CD4-positive, alpha-beta T cell (primary cell): ENCODE measurements at regions of chr21 and their contacts with region 1.

Region 1: GRCh38 chr21:41328660-41329607 is 12.3 kb downstream of the FAM3B start:
- DNase-seq: no peak
- ATAC-seq: no peak
- H3K4me3 ChIP-seq: no peak overlapping the region
- H3K4me3 Mint-ChIP-seq: no peak overlapping the region
- H3K27ac ChIP-seq: no peak overlapping the region
- H3K27ac Mint-ChIP-seq: no peak overlapping the region
- H3K4me1 ChIP-seq: no peaks in the 10 kb centered on the region
- H3K4me1 Mint-ChIP-seq: no peaks in the 10 kb centered on the region
- H3K27me3 ChIP-seq: no peaks in the 10 kb centered on the region
- H3K27me3 Mint-ChIP-seq: no peaks in the 10 kb centered on the region
- CTCF ChIP-seq: no peak

Region 2: DNA sequence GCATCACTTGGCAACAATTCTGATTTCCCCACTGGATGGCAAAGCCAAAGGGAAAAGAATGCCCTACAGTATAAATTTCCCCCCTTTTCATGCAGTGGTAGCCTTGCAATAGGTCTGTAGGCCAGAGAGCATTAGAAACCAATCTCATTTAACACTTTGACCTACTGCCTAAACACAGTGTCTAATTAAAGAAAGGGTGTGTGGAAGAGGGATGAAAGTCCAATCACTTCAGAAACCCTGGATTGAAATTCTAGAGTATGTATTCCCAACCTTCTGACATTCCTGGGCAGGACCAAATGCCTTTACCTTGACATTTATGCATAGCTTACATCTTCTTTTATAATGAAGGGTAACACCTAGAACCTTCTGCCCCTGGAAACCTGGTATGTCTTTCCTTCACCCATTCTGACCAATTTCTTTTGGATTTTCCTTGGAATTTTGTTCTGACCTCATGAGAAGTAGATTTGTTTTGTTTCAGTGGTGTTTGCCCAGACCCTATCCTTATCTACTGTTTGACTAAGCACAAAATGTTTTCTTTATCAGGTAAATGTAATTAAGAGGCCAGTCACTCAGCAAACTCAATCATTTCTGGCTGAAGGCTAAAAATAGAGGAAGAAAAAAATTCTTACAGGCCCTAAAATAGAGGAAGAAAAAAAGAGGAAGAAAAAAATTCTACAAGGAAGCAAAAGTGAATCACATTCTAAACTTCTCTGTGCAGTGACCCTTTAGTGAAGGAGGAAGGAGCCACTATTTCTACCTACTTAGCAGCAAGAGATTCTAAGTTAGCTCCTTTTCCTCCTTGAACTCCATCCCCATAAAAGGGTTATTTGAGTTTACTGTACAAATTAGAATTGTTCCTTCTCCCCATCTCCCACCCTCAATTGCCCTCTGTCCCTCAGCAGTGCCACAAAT is 352.5 kb before region 1 on chr21:
- CTCF ChIA-PET with region 1: no interaction called
- POLR2A ChIA-PET with region 1: no interaction called
- intact Hi-C with region 1: no loop called
- DNase-seq: peak in 3 of 14 experiments; percentile 1 to 9 (median 7)
- ATAC-seq: no peak
- H3K4me3 ChIP-seq: no peak overlapping the region
- H3K4me3 Mint-ChIP-seq: no peak overlapping the region
- H3K27ac ChIP-seq: no peak overlapping the region
- H3K27ac Mint-ChIP-seq: no peak overlapping the region
- H3K4me1 ChIP-seq: no peaks in the 10 kb centered on the region
- H3K4me1 Mint-ChIP-seq: no peaks in the 10 kb centered on the region
- H3K27me3 ChIP-seq: no peaks in the 10 kb centered on the region
- H3K27me3 Mint-ChIP-seq: peaks cover 8% of the 10 kb centered on the region
- CTCF ChIP-seq: no peak

Region 3: DNA sequence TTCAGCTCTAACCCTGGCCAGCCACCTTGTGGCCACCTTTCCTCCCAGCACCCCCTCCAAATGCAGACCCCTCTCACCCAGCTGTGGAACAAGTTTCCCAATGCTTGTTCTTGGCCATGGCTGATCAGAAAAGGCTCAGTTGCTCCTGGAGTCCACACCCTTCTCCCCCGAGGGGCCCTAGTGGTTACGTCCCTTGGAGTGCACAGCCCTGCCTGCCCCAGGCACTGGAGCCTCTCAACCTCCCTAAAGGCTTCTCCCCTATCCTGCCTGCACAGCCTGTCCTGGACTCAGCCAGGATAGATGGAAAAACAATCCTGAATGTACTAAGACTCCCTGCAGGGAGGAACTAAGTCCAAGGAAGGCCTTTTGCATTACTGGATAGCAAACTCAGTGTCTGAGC is 51.7 kb after region 1 on chr21:
- CTCF ChIA-PET with region 1: no interaction called
- POLR2A ChIA-PET with region 1: no interaction called
- intact Hi-C with region 1: loop called (anchors 5 to 10 kb)
- DNase-seq: no peak
- ATAC-seq: no peak
- H3K4me3 ChIP-seq: no peak overlapping the region
- H3K4me3 Mint-ChIP-seq: no peak overlapping the region
- H3K27ac ChIP-seq: no peak overlapping the region
- H3K27ac Mint-ChIP-seq: no peak overlapping the region
- H3K4me1 ChIP-seq: no peaks in the 10 kb centered on the region
- H3K4me1 Mint-ChIP-seq: peaks cover 4% of the 10 kb centered on the region
- H3K27me3 ChIP-seq: no peaks in the 10 kb centered on the region
- H3K27me3 Mint-ChIP-seq: no peaks in the 10 kb centered on the region
- CTCF ChIP-seq: no peak